MCF 10A (cell line): ENCODE measurements at regions of chr17 and their contacts with region 1.

Region 1: GRCh38 chr17:47205419-47205963 is 3.7 kb upstream of the MYL4 start:
- DNase-seq: no peak
- H3K4me3 Mint-ChIP-seq: no peak overlapping the region
- H3K27ac Mint-ChIP-seq: peak overlapping the region; percentile 14
- H3K4me1 Mint-ChIP-seq: peaks cover 11% of the 10 kb centered on the region
- H3K27me3 Mint-ChIP-seq: no peaks in the 10 kb centered on the region
- CTCF ChIP-seq: no peak

Region 2: GRCh38 chr17:47188876-47189731 is 16.4 kb before region 1 on chr17 and contains the start of gene CDC27:
- CTCF ChIA-PET with region 1: interaction called, 8 read pairs
- POLR2A ChIA-PET with region 1: interaction called, 14 read pairs
- intact Hi-C with region 1: no loop called
- DNase-seq: peak; percentile 99
- H3K4me3 Mint-ChIP-seq: peak within 1 kb of the TSS; percentile 87
- H3K27ac Mint-ChIP-seq: peak within 1 kb of the TSS; percentile 97
- H3K4me1 Mint-ChIP-seq: peaks cover 20% of the 10 kb centered on the region
- H3K27me3 Mint-ChIP-seq: no peaks in the 10 kb centered on the region
- CTCF ChIP-seq: no peak
- total RNA-seq, gene CDC27: 141 and 143 TPM in 2 replicates